ENCODE measurements at regions of chr12 and their contacts with region 1.

Region 1: DNA sequence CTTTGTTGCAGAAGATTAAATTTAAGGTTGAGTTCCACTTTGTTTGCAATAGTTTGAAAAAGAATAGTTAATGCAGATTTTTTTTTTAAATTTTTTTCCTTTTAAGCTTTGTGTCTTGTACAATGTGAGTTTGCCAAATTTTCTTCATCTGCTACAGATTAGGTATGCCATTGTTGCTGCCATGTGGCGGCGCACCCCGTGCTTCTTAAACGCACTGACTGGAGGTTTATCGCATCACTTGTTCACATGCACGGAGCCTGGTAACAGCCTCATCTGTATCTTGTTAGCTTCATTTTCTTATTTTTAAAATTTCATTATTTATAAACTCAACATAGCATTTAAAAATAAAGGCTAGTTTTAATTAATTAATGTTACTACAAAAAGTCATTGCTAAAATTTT is 43.5 kb downstream of the ETNK1 start:
- DNase-seq: no peak
- CTCF ChIP-seq: no peak

Region 2: GRCh38 chr12:22598141-22598762 is 70.2 kb before region 1 on chr12:
- CTCF ChIA-PET with region 1: no interaction called
- POLR2A ChIA-PET with region 1: no interaction called
- DNase-seq: no peak
- CTCF ChIP-seq: no peak

Region 3: DNA sequence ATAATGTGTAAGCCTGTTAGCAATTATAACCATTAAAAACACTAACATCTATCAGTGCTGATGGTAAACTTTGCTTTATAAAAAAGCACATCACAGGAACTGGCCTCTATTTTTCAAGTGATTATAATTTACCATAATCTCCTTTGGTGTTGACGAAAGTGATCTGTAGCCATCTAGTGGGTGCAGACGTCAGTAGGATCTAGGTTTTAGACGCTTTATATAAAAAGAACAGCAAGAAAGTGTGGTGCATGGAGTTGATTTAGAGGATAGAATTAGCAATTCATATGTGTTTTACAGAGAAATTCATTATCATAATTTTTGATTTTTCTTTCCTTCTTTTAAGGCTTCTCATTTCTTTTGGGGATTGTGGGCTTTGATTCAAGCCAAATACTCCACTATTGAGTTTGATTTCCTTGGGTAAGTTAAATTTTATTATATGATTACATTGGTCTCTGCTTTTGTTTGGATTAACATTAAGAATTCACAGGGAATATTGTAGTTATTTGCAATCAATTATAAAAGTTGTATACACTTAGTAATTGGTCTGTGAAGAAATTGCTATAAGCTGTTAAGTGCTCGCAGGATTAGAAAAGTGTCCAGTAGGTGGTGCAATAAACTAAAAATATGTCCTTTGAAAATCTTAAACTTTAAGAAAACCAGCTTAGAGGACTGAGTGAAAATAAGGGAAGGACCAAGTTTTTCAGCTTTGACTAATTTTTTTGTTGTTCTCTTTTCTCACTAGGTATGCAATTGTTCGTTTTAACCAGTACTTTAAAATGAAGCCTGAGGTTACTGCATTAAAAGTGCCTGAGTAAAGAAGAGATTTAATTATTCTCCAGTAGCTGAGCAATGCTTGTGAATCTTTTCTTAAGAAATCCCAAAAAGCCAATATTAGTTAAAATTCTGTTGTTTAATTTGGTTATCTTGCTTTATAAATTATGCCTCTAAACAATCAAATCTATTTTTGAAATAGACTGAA is 16.0 kb after region 1 on chr12:
- CTCF ChIA-PET with region 1: interaction called, 10 read pairs
- POLR2A ChIA-PET with region 1: no interaction called
- DNase-seq: no peak
- CTCF ChIP-seq: peak; percentile 59

Region 4: DNA sequence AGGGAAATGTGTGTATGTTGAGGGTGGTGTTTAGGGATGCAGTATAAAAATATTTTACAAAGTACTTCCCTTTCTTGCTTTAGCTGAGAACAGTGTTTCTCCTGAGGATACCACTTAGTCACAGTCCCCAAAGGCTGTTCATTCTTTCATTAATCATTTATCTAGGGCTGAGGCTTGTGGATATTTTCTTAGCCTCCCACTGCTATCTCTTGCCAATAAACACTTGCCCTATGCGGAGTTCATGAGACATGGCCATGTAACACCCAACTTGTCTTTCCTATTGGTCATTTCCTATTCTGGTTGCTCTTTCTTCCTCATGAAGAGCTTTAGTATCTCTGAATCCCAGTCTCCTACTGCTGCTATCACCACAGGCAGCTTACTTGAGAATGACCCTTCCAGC is 31.7 kb after region 1 on chr12:
- CTCF ChIA-PET with region 1: no interaction called
- POLR2A ChIA-PET with region 1: no interaction called
- DNase-seq: no peak
- CTCF ChIP-seq: no peak